ENCODE measurements at regions of chr1 and their contacts with region 1.

Region 1: GRCh38 chr1:209747580-209748262 is 8.1 kb upstream of the TRAF3IP3 start:
- DNase-seq: peak; percentile 87 to 91
- ATAC-seq: peak; percentile 95 to 99 (median 98)
- H3K4me3 ChIP-seq: peak overlapping the region in 7 of 10 donors; percentile 15 to 44 (median 41)
- H3K27ac ChIP-seq: peak overlapping the region in 9 of 10 donors; percentile 46 to 69 (median 55)
- H3K4me1 ChIP-seq: peaks cover under 1 to 49% (median 30%) of the 10 kb centered on the region in 9 donors
- H3K27me3 ChIP-seq: no peaks in the 10 kb centered on the region
- CTCF ChIP-seq: peak; percentile 77 to 96 (median 92)

Region 2: DNA sequence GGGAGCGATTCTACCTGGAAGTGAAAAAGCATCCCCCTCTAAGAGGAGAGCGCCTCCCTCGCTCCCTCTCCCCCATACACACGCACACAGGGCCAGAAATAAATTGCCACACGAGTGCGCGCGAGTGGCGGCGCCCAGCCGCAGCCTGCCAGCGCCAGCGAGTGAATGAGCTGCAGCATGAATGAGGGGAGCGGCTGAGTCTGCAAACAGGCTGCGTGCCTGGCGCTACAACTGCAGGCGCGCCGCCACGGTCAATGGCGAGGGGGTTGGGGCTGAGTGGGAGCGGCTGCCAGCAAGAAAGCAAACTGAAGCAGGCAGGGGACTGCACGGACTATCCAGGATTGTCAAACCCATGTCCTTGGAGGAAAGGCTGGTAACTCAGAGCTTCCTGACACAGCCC is 162.0 kb before region 1 on chr1:
- intact Hi-C with region 1: loop called in 2 of 10 experiments (anchors 2 to 5 kb)
- DNase-seq: peak; percentile 46 to 70
- ATAC-seq: peak; percentile 54 to 95 (median 87)
- H3K4me3 ChIP-seq: peak overlapping the region in 3 of 10 donors; percentile 6 to 29 (median 12)
- H3K27ac ChIP-seq: no peak overlapping the region
- H3K4me1 ChIP-seq: peaks cover 0 to 20% (median 10%) of the 10 kb centered on the region in 9 donors
- H3K27me3 ChIP-seq: peaks cover 0 to 56% (median 32%) of the 10 kb centered on the region in 7 donors
- CTCF ChIP-seq: peak in 3 of 9 donors; percentile 31 to 41 (median 32)

Region 3: DNA sequence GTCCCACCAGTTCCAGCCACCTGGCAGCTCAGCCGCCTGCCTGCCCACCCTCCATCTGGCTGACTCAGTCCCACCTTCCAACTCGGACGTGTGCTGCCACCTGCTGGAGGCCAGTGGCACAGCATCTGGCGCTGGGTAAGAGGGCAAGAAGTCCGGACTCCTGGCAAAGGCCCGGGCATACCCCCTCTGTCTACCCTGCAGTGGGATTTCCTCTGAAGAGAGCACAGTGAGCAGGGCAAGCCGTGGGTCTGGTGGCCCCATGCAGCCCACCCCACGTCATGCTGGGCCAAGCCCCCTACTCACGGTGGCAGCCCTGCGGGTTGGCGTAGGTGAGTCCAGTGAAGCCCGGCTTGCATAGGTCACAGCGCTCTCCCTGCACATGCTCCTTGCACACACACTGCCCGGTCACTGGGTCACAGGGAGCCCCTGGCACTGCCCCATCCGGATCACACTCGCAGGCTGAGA is 120.0 kb before region 1 on chr1:
- intact Hi-C with region 1: loop called in 4 of 10 experiments (anchors 2 to 10 kb)
- DNase-seq: peak; percentile 77 to 86
- ATAC-seq: peak; percentile 70 to 82 (median 78)
- H3K4me3 ChIP-seq: peak overlapping the region in 3 of 10 donors; percentile 11 to 32 (median 14)
- H3K27ac ChIP-seq: peak overlapping the region in 5 of 10 donors; percentile 7 to 76 (median 61)
- H3K4me1 ChIP-seq: peaks cover 20 to 60% (median 45%) of the 10 kb centered on the region in 9 donors
- H3K27me3 ChIP-seq: no peaks in the 10 kb centered on the region
- CTCF ChIP-seq: peak; percentile 93 to 99 (median 97)

Region 4: GRCh38 chr1:209648931-209649776 is 98.6 kb before region 1 on chr1:
- intact Hi-C with region 1: loop called in 3 of 10 experiments (anchors 5 to 10 kb)
- DNase-seq: no peak
- ATAC-seq: peak in 5 of 8 donors; percentile 23 to 74 (median 42)
- H3K4me3 ChIP-seq: no peak overlapping the region
- H3K27ac ChIP-seq: peak overlapping the region in 9 of 10 donors; percentile 10 to 97 (median 42)
- H3K4me1 ChIP-seq: peaks cover 30 to 97% (median 77%) of the 10 kb centered on the region in 9 donors
- H3K27me3 ChIP-seq: no peaks in the 10 kb centered on the region
- CTCF ChIP-seq: no peak

Region 5: DNA sequence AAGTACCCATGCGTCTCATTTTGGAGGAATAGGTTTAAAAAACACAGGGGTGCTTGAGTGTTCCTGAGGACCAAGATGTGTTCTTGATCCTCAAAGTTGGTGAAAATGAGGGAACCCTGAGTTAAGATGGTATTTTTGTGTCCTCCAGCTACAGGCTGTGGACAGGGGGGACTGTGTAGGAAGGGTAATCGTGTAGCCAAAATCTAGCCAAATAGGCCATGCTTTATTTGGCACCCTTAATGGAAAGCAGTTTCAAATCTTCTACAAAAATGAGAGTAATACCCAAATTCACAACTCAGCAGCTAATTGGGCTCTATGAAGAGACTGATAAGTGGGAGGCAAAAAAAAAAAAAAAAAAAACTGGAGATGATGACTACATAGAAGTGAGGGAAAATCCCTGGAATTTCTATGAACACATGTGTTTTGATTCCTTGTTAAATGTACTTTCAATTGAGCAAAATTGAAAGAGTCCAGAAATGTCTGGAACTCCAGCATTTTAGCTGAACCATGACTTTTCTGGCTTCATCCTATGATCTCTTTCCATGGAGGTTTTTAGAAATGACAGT is 42.6 kb before region 1 on chr1:
- intact Hi-C with region 1: loop called in 1 of 10 experiments (anchors 5 kb)
- DNase-seq: no peak
- ATAC-seq: peak in 7 of 8 donors; percentile 32 to 65 (median 56)
- H3K4me3 ChIP-seq: peak overlapping the region in 2 of 10 donors; percentile 8 to 20
- H3K27ac ChIP-seq: peak overlapping the region in 6 of 10 donors; percentile 44 to 57 (median 52)
- H3K4me1 ChIP-seq: peaks cover 3 to 24% (median 12%) of the 10 kb centered on the region in 9 donors
- H3K27me3 ChIP-seq: no peaks in the 10 kb centered on the region
- CTCF ChIP-seq: no peak

Region 6: DNA sequence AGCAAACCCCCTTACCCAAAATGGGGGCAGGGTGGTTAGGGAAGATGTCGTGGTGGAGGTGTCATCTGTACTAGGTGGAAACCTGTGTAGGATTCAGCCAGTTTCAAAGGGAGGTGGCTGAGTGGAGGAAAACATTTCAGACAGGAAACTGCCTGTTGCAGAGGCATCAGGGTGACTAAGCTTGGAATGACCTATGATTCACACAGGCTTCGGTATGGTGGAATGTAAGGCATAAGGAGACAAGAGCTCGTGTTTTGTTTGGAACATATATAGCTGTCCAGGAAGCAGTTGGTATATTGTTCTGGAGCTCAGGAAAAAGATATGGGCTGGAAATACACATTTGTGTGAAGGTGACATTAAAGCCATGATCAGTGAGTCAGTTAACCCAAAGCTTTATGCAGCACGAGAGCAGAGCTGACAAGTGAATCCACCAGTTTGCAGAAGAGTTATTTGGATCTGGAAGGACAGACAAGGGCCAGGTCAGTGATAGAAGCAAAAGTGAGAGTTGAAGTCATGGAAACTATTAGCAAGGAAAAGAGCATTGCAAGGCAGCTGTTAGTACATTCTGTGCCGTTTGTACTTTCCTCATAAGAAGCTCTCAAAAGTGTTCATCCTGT is 92.3 kb after region 1 on chr1:
- intact Hi-C with region 1: no loop called
- DNase-seq: no peak
- ATAC-seq: peak in 2 of 8 donors; percentile 58 to 73
- H3K4me3 ChIP-seq: no peak overlapping the region
- H3K27ac ChIP-seq: peak overlapping the region in 2 of 10 donors; percentile 5 to 54
- H3K4me1 ChIP-seq: peaks cover 0 to 18% (median 0%) of the 10 kb centered on the region in 9 donors
- H3K27me3 ChIP-seq: no peaks in the 10 kb centered on the region
- CTCF ChIP-seq: no peak

Region 7: DNA sequence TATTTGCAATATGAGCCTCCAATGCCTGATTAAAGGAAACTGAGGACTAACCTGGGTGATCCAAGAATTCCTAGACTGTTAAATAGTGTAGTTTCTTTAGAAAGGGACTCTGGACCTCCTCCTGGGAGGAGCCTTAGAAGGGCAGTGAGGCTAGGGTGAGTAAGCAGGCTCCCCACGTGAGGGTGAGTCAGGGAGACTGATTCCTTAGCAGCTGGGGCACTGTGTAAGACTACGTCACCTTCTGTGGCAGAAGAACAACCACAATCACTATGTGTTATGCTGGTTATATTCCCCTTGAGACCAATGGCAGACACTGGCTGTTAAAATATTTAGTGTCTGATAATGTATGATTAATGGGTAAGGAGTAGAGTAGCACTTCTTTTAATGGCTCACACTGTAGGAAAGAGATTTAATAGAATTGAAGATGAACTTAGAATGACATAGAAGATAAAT is 137.0 kb after region 1 on chr1:
- intact Hi-C with region 1: no loop called
- DNase-seq: no peak
- ATAC-seq: peak in 3 of 8 donors; percentile 49 to 91 (median 67)
- H3K4me3 ChIP-seq: no peak overlapping the region
- H3K27ac ChIP-seq: no peak overlapping the region
- H3K4me1 ChIP-seq: peaks cover 0 to 9% (median 0%) of the 10 kb centered on the region in 9 donors
- H3K27me3 ChIP-seq: peaks cover 0 to 69% (median 44%) of the 10 kb centered on the region in 7 donors
- CTCF ChIP-seq: no peak

Region 8: GRCh38 chr1:210087058-210087457 is 339.3 kb after region 1 on chr1:
- intact Hi-C with region 1: no loop called
- DNase-seq: no peak
- ATAC-seq: peak in 1 of 8 donors; percentile 13
- H3K4me3 ChIP-seq: no peak overlapping the region
- H3K27ac ChIP-seq: no peak overlapping the region
- H3K4me1 ChIP-seq: no peaks in the 10 kb centered on the region
- H3K27me3 ChIP-seq: peaks cover 0 to 10% (median 0%) of the 10 kb centered on the region in 7 donors
- CTCF ChIP-seq: no peak